A549 (cell line): ENCODE measurements at regions of chr9 and their contacts with region 1.

Region 1: GRCh38 chr9:6584881-6585597 is 60.5 kb downstream of the GLDC start:
- DNase-seq: peak; percentile 26 to 50
- ATAC-seq: peak; percentile 62 to 82; a peak in 4 of 6 replicates
- H3K4me3 ChIP-seq: no peak overlapping the region
- H3K27ac ChIP-seq: no peak overlapping the region
- H3K4me1 ChIP-seq: no peaks in the 10 kb centered on the region
- CTCF ChIP-seq: peak; percentile 79
- EP300 ChIP-seq: no peak
- POLR2A ChIP-seq: no peak
- RAD21 ChIP-seq: peak; percentile 68 to 80

Region 2: GRCh38 chr9:6566409-6567139 is 18.5 kb before region 1 on chr9:
- CTCF ChIA-PET with region 1: interaction called, 14 read pairs
- POLR2A ChIA-PET with region 1: interaction called, 6 read pairs
- DNase-seq: peak; percentile 89 to 90
- ATAC-seq: peak; percentile 94 to 95
- H3K4me3 ChIP-seq: peak overlapping the region; percentile 15; the same call in 2 of the 3 replicates
- H3K27ac ChIP-seq: peak overlapping the region; percentile 93 to 94
- H3K4me1 ChIP-seq: peaks cover 25% of the 10 kb centered on the region
- CTCF ChIP-seq: no peak
- EP300 ChIP-seq: peak in 1 of 2 experiments; percentile 47; a peak in 2 of 5 replicates
- POLR2A ChIP-seq: no peak
- RAD21 ChIP-seq: no peak

Region 3: GRCh38 chr9:6598249-6598725 is 13.2 kb after region 1 on chr9:
- CTCF ChIA-PET with region 1: interaction called, 10 read pairs
- POLR2A ChIA-PET with region 1: no interaction called
- DNase-seq: no peak
- ATAC-seq: no peak
- H3K4me3 ChIP-seq: no peak overlapping the region
- H3K27ac ChIP-seq: no peak overlapping the region
- H3K4me1 ChIP-seq: no peaks in the 10 kb centered on the region
- CTCF ChIP-seq: no peak
- EP300 ChIP-seq: no peak
- POLR2A ChIP-seq: no peak
- RAD21 ChIP-seq: no peak

Region 4: GRCh38 chr9:6667633-6668280 is 82.7 kb after region 1 on chr9:
- CTCF ChIA-PET with region 1: interaction called, 111 read pairs
- POLR2A ChIA-PET with region 1: no interaction called
- DNase-seq: peak; percentile 53 to 73
- ATAC-seq: peak in 1 of 2 experiments; percentile 51; a peak in 2 of 6 replicates
- H3K4me3 ChIP-seq: no peak overlapping the region
- H3K27ac ChIP-seq: peak overlapping the region; percentile 11 to 84; a peak in 3 of 6 replicates
- H3K4me1 ChIP-seq: peaks cover 46% of the 10 kb centered on the region
- CTCF ChIP-seq: peak; percentile 87
- EP300 ChIP-seq: no peak
- POLR2A ChIP-seq: no peak
- RAD21 ChIP-seq: peak; percentile 78 to 80

Region 5: DNA sequence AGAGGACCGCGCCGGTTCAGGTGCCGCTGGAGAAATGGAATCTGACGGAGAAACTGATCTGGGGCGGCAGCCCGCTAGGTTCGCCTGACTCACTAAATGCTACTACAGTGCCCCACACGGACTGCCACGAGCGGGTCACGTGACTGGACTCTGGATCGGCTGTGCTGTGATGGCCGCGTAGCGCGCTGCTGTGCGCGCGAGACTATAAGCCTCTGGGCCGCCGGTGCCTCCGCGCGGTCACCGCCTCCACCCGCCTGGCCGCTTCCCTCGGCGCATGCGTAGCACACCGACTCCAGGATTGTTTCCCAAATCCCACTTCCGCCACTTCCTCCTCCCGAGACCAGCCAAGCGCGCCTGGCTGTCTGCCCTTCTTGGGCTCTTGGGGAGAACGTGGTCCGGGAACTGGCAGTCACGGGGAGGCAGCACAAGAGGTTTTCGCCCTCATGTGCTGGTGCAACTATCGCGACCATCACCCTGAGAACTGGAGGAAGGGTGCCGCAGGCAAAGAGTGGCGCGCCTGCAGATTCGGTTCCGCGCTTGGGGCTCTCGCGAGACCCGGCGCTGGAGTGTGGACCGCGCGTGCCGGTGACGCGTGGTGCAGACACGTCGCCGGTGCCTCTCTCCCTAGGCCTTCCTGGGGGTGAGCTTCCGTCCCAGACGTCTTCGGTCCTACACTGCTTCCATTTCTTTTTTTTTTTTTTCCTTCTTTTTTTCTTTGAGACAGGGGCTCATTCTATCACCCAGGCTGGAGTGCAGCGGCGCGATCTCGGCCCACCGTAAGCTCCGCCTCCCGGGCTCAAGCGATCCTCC is 96.3 kb after region 1 on chr9:
- CTCF ChIA-PET with region 1: interaction called, 39 read pairs
- POLR2A ChIA-PET with region 1: interaction called, 5 read pairs
- DNase-seq: peak; percentile 99
- ATAC-seq: peak; percentile 96
- H3K4me3 ChIP-seq: peak overlapping the region; percentile 71
- H3K27ac ChIP-seq: peak overlapping the region; percentile 94 to 99
- H3K4me1 ChIP-seq: peaks cover 9% of the 10 kb centered on the region
- CTCF ChIP-seq: no peak
- EP300 ChIP-seq: no peak
- POLR2A ChIP-seq: peak; percentile 58
- RAD21 ChIP-seq: no peak

Region 6: GRCh38 chr9:6686396-6686795 is 101.4 kb after region 1 on chr9:
- CTCF ChIA-PET with region 1: interaction called, 39 read pairs
- POLR2A ChIA-PET with region 1: interaction called, 5 read pairs
- DNase-seq: peak in 1 of 2 experiments; percentile 53
- ATAC-seq: no peak
- H3K4me3 ChIP-seq: no peak overlapping the region
- H3K27ac ChIP-seq: peak overlapping the region in 1 of 2 experiments; percentile 47; a peak in 1 of 6 replicates
- H3K4me1 ChIP-seq: peaks cover 9% of the 10 kb centered on the region
- CTCF ChIP-seq: peak; percentile 57
- EP300 ChIP-seq: no peak
- POLR2A ChIP-seq: no peak
- RAD21 ChIP-seq: peak; percentile 53 to 55; a peak in 4 of 5 replicates

Region 7: DNA sequence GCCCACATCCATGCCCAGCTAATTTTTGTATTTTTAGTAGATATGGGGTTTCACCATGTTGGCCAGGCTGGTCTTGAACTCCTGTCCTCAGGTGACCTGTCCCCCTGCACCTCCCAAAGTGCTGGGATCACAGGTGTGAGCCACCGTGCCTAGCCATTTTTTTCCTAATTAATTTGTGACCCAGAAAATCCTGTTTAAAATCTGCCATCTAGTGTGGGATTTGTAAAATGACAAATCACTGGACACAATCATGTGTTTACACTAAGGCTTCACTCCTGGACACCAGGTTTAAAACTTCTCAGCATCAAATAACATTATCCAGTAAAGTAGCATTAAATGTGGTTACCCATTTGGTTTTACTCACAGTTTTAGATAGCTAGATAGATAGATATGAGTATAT is 154.2 kb after region 1 on chr9:
- CTCF ChIA-PET with region 1: interaction called, 16 read pairs
- POLR2A ChIA-PET with region 1: no interaction called
- DNase-seq: peak; percentile 26 to 36
- ATAC-seq: peak; percentile 68 to 78; a peak in 4 of 6 replicates
- H3K4me3 ChIP-seq: no peak overlapping the region
- H3K27ac ChIP-seq: no peak overlapping the region
- H3K4me1 ChIP-seq: no peaks in the 10 kb centered on the region
- CTCF ChIP-seq: peak; percentile 53
- EP300 ChIP-seq: no peak
- POLR2A ChIP-seq: no peak
- RAD21 ChIP-seq: peak; percentile 61 to 66